ENCODE measurements at regions of chr16 and their contacts with region 1.

Region 1: DNA sequence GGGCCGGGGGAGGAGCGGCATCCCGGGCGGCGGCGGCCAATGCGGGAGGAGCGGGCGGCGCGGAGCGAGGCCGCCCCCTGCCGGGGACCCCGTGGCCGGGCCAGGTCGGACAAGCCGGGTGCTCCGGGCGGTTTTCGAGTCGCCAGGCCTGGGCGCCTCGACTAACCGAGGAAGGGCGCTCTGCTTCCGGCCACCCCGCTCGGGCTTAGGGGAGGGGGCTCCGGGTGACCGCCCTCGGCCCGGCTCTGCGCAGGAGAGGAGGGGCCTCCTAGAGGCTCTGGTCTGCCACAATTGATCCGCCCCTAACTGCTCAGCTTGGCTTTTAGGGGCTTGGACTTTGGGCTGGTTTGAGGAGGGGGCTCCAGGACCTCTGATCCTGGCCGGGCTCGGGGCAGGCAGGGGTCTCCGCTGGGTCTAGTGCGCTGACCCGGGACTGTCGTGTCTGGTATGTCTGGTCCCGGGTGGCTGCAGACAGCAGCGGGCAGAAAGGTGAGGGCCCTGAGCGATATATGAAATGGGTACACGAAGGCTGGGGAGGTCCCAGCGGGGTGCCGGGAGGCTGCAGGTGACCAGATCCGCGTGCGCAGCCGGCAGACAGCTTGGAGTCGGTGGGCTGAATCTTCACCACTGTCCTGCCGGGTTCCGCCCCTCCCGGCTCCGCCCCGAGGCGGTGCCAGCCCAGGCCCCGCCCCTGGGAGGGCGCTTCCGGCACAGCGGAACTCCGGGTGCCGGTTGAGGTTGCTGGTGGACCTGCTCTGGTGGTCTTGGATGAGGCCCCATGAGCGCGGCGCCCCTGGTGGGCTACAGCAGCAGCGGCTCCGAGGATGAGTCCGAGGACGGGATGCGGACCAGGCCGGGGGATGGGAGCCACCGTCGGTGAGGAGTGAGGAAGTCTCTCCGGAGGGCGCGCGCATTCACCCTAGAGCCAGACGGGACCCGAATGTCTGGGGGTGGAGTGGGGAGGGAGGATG is at the start of gene USB1:
- DNase-seq: peak; percentile 76 to 79
- ATAC-seq: peak; percentile 86 to 90
- H3K4me3 ChIP-seq: peak within 1 kb of the TSS; percentile 69 to 88 (median 78)
- H3K27ac ChIP-seq: peak within 1 kb of the TSS; percentile 97 to 99 (median 98)
- H3K4me1 ChIP-seq: peaks cover 19 to 21% of the 10 kb centered on the region in 2 donors
- H3K27me3 ChIP-seq: no peaks in the 10 kb centered on the region
- CTCF ChIP-seq: peak; percentile 57 to 94 (median 69)
- POLR2A ChIP-seq: peak; percentile 76 to 82
- total RNA-seq, gene USB1: 5.7 to 31.2 (median 15.9) TPM

Region 2: GRCh38 chr16:57447186-57447962 is 553.6 kb before region 1 on chr16 and contains the starts of genes CIAPIN1 and COQ9:
- in situ Hi-C with region 1: no loop called
- intact Hi-C with region 1: loop called (anchors 1 kb)
- DNase-seq: peak; percentile 89 to 94
- ATAC-seq: peak; percentile 92 to 97
- H3K4me3 ChIP-seq: peak within 1 kb of the TSS; percentile 82 to 97 (median 95)
- H3K27ac ChIP-seq: peak within 1 kb of the TSS; percentile 98 to 99 (median 98)
- H3K4me1 ChIP-seq: peaks cover 32 to 38% of the 10 kb centered on the region in 2 donors
- H3K27me3 ChIP-seq: no peaks in the 10 kb centered on the region
- CTCF ChIP-seq: no peak
- POLR2A ChIP-seq: peak; percentile 95 to 97
- total RNA-seq, gene CIAPIN1: 31.0 to 38.8 (median 37.9) TPM
- total RNA-seq, gene COQ9: 107 to 171 (median 135) TPM

Region 3: GRCh38 chr16:57734925-57735754 is 265.9 kb before region 1 on chr16:
- in situ Hi-C with region 1: loop called in 1 of 4 experiments (anchors 25 kb)
- intact Hi-C with region 1: loop called (anchors 1 kb)
- DNase-seq: peak; percentile 99
- ATAC-seq: peak; percentile 97 to 98
- H3K4me3 ChIP-seq: peak overlapping the region; percentile 79 to 99 (median 90)
- H3K27ac ChIP-seq: peak overlapping the region; percentile 84 to 89 (median 87)
- H3K4me1 ChIP-seq: peaks cover 14 to 19% of the 10 kb centered on the region in 2 donors
- H3K27me3 ChIP-seq: no peaks in the 10 kb centered on the region
- CTCF ChIP-seq: peak in 1 of 5 experiments; percentile 10
- POLR2A ChIP-seq: peak in 1 of 2 donors; percentile 31

Region 4: GRCh38 chr16:57775661-57776469 is 225.1 kb before region 1 on chr16:
- in situ Hi-C with region 1: loop called in 1 of 4 experiments (anchors 25 kb)
- intact Hi-C with region 1: loop called (anchors 5 kb)
- DNase-seq: peak; percentile 51 to 73
- ATAC-seq: peak; percentile 96 to 97
- H3K4me3 ChIP-seq: no peak overlapping the region
- H3K27ac ChIP-seq: no peak overlapping the region
- H3K4me1 ChIP-seq: peaks cover 0 to 3% of the 10 kb centered on the region in 2 donors
- H3K27me3 ChIP-seq: no peaks in the 10 kb centered on the region
- CTCF ChIP-seq: peak; percentile 75 to 85 (median 76)
- POLR2A ChIP-seq: no peak

Region 5: GRCh38 chr16:58025351-58026138 is 24.6 kb after region 1 on chr16 and contains the start of gene MMP15:
- in situ Hi-C with region 1: no loop called
- intact Hi-C with region 1: loop called (anchors 2 kb)
- DNase-seq: peak; percentile 36 to 63
- ATAC-seq: peak; percentile 64 to 70
- H3K4me3 ChIP-seq: peak within 1 kb of the TSS; percentile 66 to 99 (median 70)
- H3K27ac ChIP-seq: peak within 1 kb of the TSS; percentile 73 to 92 (median 91)
- H3K4me1 ChIP-seq: peaks cover 25 to 42% of the 10 kb centered on the region in 2 donors
- H3K27me3 ChIP-seq: no peaks in the 10 kb centered on the region
- CTCF ChIP-seq: no peak
- POLR2A ChIP-seq: peak; percentile 63 to 76
- total RNA-seq, gene MMP15: 2.9 to 8.1 (median 4.9) TPM

Measured in gastrocnemius medialis (tissue), 4 donors.